Activated CD4-positive, alpha-beta T cell treated with anti-CD3 and anti-CD28 coated beads, Interleukin-2, amount 10 ng/mL, durations not matched to agents 24 days and 14 days (primary cell): ENCODE measurements at regions of chr12 and their contacts with region 1.

Region 1: DNA sequence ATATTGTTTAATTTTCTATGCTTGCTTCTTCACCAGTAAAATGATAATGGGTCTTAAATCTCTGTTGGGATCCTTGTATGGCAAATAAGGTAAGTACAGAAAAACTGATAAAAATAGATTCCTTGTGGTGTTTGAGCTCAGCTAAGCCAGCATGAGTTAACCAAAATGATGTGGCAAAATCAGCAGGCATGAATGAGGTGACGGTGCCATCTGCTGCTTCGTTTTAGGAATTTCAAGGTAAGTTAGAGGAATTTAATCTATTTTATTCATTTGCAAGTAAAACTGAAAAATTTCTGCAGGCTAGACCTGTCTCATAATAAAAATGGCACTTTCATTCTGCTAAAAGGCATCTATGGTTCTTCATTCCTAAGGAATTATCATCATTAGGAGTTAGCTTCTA is 10.0 kb upstream of the CLEC7A start:
- DNase-seq: peak; percentile 82
- H3K4me3 Mint-ChIP-seq: no peak overlapping the region
- H3K27ac Mint-ChIP-seq: no peak overlapping the region
- H3K4me1 Mint-ChIP-seq: no peaks in the 10 kb centered on the region
- H3K27me3 Mint-ChIP-seq: peaks cover 38% of the 10 kb centered on the region

Region 2: DNA sequence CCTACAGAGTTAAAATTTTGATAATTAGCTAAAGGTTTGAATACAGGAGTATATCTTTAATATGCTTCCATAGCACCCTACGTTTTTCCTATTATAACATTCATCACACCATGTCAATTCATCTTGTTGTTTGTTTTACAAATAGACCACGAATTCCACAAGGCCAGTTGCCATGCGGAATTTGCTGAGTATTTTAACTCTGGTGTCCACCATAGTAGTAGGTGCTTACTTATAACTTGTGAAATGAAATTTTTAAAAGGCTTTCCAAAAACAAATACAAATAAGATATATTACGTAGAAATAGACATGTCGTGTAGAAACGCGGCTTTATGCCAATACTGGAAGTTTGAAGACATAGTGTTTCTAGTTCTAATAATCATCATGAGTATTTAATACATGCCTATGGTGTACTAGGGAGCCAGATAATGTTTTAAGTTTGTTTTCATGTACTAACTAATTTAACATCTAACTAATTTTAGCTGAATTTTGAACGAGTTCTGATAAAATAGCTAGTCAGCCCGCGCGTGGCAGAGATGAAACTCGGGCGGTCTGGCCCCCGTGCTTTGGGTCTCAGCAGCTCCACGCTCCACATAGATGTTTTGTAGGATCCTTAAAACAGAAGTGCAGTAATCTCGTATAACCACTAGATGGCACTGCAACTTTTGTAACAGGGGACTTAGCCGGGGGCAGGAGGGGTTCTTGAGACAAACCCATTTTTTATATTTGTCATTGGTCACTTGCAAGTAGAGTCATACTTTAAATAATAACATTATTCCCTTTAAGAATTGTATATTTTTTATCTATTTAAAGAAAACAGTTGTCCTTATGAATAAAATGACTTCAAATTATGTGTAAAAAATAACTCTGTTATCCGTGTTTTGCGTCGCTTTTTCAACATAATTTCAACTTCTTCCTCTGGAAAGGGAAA is 389.5 kb before region 1 on chr12:
- intact Hi-C with region 1: loop called (anchors 1 kb)
- DNase-seq: peak; percentile 89
- H3K4me3 Mint-ChIP-seq: peak overlapping the region; percentile 55
- H3K27ac Mint-ChIP-seq: peak overlapping the region; percentile 70
- H3K4me1 Mint-ChIP-seq: peaks cover 46% of the 10 kb centered on the region
- H3K27me3 Mint-ChIP-seq: no peaks in the 10 kb centered on the region

Region 3: GRCh38 chr12:9940375-9940774 is 199.6 kb before region 1 on chr12:
- intact Hi-C with region 1: loop called (anchors 5 kb)
- DNase-seq: peak; percentile 74
- H3K4me3 Mint-ChIP-seq: no peak overlapping the region
- H3K27ac Mint-ChIP-seq: no peak overlapping the region
- H3K4me1 Mint-ChIP-seq: peaks cover 22% of the 10 kb centered on the region
- H3K27me3 Mint-ChIP-seq: peaks cover 28% of the 10 kb centered on the region

Region 4: DNA sequence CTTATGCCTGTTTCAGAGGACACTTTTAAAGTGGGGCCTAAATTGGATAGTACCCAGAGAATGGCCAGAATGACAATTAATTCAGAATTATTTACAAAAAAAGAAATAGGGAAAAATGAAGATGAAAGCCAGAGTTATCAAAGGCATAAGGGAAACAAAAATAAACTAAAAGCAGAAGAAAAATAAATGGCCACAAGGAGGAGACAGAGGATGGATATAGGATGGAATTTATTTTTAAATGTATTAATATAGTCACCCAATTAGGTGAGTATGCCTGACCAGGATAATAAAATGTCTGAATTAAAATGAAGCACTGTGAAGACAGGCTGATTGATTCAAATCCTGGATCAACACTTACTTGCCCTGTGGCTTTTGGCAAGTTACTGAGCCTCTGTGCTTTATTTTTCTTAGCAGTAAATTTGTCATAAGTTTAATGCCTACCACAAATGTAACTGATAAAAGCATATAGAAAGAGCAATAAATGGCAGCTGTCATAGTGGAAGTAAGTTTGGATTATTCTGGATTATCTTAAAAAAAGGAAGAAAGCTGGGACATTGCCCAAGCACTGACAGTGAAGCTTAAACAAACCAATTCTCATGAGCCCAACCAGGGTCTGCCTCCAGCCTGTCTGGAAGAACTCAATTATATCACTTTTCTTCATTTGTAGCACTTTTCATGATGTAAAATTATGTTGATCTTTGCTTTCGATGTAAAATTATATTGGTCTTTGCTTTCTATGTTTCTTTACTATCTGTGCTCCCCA is 106.0 kb before region 1 on chr12:
- intact Hi-C with region 1: loop called (anchors 1 kb)
- DNase-seq: peak; percentile 30
- H3K4me3 Mint-ChIP-seq: no peak overlapping the region
- H3K27ac Mint-ChIP-seq: no peak overlapping the region
- H3K4me1 Mint-ChIP-seq: no peaks in the 10 kb centered on the region
- H3K27me3 Mint-ChIP-seq: peaks cover 14% of the 10 kb centered on the region

Region 5: DNA sequence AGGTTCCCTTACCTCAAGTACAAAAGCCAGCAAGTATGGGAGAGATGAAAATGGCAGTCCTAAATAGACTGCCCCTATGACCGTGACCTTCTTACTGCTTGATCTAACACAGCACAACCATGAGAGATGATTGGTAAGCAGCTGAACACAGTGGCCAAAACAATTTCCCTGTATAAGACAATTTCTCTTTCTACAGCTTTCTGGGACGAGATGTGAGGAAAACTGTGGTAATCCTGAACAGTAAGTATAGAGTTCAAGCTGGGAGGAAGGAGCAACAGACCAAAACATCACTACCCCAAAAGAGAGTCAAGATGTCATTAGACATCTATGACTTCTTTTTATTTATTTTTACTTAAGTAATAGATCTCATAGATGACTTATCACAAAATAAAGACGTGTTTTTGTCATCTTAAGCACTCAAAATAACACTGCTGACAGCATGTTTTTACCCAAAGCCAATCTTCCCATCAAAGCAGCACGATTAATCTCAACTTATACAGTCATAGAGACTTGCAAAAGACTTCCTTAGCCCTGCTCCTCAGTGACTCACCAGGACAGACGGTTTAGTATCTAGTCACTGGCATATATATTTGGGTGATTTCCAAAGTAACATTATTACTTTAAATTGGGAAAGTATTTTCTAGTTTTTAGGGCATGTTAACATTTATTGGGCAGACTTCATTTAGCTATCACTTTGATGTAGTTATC is 42.5 kb after region 1 on chr12:
- intact Hi-C with region 1: no loop called
- DNase-seq: no peak
- H3K4me3 Mint-ChIP-seq: no peak overlapping the region
- H3K27ac Mint-ChIP-seq: no peak overlapping the region
- H3K4me1 Mint-ChIP-seq: no peaks in the 10 kb centered on the region
- H3K27me3 Mint-ChIP-seq: peaks cover 17% of the 10 kb centered on the region